Left colon (tissue), 2 donors: ENCODE measurements at regions of chr1 and their contacts with region 1.

Region 1: DNA sequence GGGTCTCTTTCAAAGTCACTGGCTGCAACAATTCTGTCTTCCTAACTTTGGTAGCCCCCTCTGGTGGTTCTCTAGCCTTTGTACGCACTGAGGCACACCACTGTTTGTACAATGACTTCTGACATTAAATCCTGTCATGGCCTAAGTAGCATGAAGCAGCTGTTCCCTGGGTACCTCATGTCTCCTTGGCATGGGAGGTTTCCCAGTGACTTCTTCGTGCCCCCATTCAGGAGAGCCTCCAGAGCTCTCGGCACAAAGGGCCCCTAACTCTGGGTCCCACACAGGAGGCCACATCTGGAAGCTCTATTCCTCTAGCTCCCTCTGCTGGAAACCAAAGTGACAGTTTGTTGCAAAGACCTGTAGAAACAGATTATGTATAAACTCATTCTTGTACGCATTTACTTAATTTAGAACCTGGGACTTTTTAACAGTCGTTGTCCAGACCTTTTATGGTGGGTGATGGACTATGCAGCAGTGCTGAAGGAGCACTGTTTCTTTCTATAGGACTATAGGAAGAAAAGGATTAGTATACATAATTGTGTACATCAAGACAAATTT is 13.4 kb downstream of the SWT1 start:
- DNase-seq: peak in 1 of 2 donors; percentile 16
- ATAC-seq: peak; percentile 68

Region 2: DNA sequence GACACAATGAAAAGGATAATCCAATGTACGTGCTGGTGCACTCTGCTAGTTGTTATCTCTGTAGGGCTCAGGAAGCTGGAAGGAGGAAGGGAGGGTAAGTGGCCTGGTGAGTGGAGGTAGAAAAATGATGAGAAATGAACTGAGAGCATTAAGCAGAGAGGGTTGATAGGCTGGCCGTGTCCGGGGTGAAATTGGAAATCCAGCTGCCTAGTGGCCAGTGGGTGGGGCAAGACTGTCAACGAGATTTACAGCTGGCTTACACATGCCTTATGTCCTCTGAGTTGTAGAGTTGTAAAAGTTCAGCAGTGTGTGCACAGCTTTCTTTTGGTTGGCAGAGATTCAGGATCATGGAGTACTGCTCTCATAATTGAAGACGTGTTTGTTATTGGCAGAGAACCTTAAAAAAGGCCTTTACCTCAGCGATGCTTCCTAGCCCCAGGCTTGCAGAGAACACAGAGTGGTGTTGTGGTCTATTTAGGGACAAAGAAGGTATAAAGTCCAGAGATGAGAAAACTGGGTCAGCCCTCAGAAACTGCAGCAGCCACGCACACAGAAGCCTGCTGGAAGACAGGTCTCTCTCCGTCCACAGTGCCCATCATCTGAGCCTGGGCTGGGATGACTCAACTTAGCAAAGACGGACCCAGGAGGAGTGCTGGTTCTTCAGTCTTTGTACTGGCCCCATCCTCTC is 548.1 kb before region 1 on chr1:
- intact Hi-C with region 1: no loop called
- DNase-seq: peak; percentile 77 to 89
- ATAC-seq: peak; percentile 94

Region 3: DNA sequence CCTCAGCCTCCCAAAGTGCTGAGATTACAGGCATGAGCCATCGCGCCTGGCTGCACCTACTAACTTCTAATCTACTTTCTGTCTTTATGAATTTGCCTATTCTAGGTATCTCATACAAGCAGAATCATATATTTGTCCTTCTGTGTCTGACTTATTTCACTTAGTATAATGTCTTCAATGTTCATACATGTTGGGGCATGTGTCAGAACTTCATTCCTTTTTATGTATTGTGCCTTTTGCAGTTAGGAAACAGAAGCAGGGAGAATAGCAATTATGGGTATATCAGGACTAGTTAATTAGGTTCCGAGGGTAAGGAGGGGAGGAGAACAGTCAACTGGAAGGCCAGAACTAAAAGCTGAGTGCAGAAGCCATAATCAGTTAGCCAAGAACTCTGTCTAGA is 178.1 kb before region 1 on chr1:
- intact Hi-C with region 1: loop called in 1 of 2 experiments (anchors 10 kb)
- DNase-seq: no peak
- ATAC-seq: no peak

Region 4: DNA sequence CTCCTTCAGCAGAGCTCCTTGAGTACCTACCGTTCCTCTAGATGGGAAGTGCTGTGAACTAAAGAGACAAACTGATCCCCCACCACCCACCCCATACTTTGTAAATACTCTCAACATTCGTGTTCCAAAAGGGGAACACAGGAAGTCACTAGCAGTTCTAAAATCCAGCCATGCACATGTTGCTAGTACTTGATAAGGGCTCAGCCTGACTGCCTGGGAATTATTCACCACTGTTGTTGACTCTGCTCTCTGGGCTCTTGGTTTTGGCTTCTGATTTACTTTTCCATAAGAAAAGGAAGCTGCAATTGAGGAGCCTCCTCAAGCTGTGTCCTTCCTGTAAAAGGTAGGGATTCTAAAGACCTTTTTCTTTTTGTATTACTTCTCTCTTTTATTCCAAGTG is 79.2 kb after region 1 on chr1:
- intact Hi-C with region 1: no loop called
- DNase-seq: no peak
- ATAC-seq: no peak